B cell (primary cell): ENCODE measurements at regions of chr1 and their contacts with region 1.

Region 1: DNA sequence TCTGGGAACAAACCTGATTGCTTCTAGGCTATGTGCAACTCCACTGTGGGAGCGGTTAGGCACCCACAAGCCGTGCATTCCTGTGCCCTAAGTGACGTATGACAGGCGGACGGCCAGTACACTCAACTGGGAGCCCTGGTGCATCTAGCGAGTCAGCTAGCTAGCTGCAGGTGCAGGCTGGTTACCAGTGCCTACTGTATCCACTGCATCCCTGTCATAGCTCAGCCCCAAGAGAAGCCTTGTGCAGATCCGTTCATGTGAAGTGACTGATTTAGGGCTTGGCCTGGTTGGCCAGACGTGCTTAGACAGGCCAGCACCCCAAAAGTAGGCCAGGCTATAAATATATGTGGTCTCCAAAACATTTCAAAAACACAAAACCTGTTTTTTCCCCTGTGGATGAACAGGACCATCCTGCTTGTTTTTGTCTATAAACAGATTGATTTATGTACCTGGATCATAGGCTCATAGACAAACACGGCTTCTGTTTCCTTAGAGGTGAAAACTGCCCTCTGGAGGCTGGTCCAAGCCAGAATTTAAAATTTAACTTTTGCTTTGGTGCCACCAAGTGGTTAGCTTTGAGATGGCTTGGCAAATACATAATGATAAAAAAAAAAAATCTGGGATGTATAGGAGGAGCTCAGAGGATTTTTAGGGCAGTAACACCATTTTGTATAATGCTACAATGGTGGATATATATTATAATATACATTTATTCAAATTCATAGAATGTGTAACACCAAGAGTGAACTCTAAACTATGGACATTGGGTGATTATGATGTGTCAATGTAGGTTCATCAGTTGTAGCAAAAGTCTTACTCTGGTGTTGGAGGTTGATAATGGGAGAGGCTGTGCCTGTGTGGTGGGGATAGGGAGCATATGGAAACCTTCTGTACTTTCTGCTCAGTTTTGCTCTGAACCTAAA is 68.5 kb downstream of the GIPC2 start:
- DNase-seq: peak; percentile 72
- ATAC-seq: peak; percentile 82
- H3K4me3 ChIP-seq: no peak overlapping the region
- H3K4me3 Mint-ChIP-seq: no peak overlapping the region
- H3K27ac ChIP-seq: no peak overlapping the region
- H3K27ac Mint-ChIP-seq: no peak overlapping the region
- H3K4me1 ChIP-seq: no peaks in the 10 kb centered on the region
- H3K4me1 Mint-ChIP-seq: no peaks in the 10 kb centered on the region
- H3K27me3 ChIP-seq: no peaks in the 10 kb centered on the region
- H3K27me3 Mint-ChIP-seq: no peaks in the 10 kb centered on the region
- CTCF ChIP-seq: peak; percentile 92

Region 2: DNA sequence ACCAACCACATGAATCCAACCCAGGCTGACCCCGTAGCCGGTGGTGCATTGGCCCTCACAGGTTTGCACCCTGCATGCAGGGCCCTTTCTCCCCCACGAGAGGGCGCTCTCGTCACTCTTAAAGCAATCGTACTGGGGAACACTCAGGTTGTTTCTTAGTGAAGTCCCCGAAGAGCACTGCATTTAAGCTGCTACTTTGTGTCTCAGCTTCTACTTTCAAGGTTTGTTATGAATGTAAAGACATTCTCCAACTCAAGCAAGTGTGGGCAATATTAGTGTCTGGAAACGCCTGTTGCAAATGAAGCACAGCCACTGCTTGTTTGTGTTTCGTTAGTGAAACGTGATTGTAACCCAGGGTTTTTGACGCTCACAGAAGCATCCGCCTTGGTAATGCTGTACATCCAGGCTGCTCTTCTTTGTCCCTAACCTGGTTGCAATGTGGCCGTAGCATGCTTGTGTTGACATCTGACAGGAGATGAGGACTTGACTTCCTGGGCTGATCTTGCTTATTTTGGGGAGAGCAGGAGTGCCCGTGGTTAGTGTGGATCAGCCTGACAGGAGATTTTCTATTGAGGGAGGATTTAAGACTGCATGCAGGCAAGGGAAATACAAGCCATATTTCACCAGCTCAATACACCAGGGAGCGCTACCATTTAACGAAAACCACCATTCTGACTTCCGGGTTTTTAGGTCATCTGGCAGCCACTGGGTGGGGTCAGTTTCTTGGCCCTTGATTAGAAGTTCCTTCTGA is 1959.9 kb before region 1 on chr1:
- CTCF ChIA-PET with region 1: interaction called, 3 read pairs
- POLR2A ChIA-PET with region 1: no interaction called
- intact Hi-C with region 1: loop called (anchors 10 kb)
- DNase-seq: peak; percentile 80
- ATAC-seq: peak; percentile 88
- H3K4me3 ChIP-seq: peak overlapping the region; percentile 39 to 62 (median 58)
- H3K4me3 Mint-ChIP-seq: peak overlapping the region; percentile 92
- H3K27ac ChIP-seq: peak overlapping the region; percentile 2 to 54
- H3K27ac Mint-ChIP-seq: peak overlapping the region; percentile 79
- H3K4me1 ChIP-seq: peaks cover 7 to 8% of the 10 kb centered on the region in 2 donors
- H3K4me1 Mint-ChIP-seq: peaks cover 15% of the 10 kb centered on the region
- H3K27me3 ChIP-seq: no peaks in the 10 kb centered on the region
- H3K27me3 Mint-ChIP-seq: peaks cover 3% of the 10 kb centered on the region
- CTCF ChIP-seq: peak; percentile 98

Region 3: GRCh38 chr1:76330991-76331603 is 1783.2 kb before region 1 on chr1:
- CTCF ChIA-PET with region 1: no interaction called
- POLR2A ChIA-PET with region 1: no interaction called
- intact Hi-C with region 1: loop called (anchors 5 kb)
- DNase-seq: peak; percentile 49
- ATAC-seq: peak; percentile 47
- H3K4me3 ChIP-seq: no peak overlapping the region
- H3K4me3 Mint-ChIP-seq: no peak overlapping the region
- H3K27ac ChIP-seq: no peak overlapping the region
- H3K27ac Mint-ChIP-seq: no peak overlapping the region
- H3K4me1 ChIP-seq: no peaks in the 10 kb centered on the region
- H3K4me1 Mint-ChIP-seq: no peaks in the 10 kb centered on the region
- H3K27me3 ChIP-seq: no peaks in the 10 kb centered on the region
- H3K27me3 Mint-ChIP-seq: no peaks in the 10 kb centered on the region
- CTCF ChIP-seq: peak; percentile 98

Region 4: DNA sequence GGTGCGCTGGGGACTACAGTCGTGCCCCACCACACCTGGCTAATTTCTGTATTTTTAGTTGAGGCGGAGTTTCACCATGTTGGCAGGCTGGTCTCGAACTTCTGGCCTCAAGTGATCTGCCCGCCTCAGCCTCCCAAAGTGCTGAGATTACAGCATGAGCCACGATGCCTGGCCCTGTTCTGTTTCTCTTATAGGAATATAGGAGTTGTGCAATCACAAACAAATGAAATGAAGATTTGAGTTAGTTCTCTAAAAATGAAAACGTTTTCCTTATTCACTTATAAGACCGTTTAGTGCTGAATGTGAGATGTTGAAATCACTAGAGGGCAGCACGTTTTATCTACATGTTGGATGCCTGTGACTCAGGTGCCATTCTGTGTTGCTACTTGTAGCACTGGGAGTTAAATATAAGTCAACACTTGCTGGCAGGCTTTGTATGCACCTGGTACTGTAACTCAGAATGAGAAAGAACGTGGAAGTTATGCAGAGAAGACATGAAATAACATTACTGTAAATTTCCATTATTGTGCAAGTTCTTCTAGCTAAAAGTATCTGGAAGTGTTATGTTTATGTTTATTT is 289.1 kb before region 1 on chr1:
- CTCF ChIA-PET with region 1: interaction called, 26 read pairs
- POLR2A ChIA-PET with region 1: no interaction called
- intact Hi-C with region 1: no loop called
- DNase-seq: peak; percentile 26
- ATAC-seq: peak; percentile 24
- H3K4me3 ChIP-seq: no peak overlapping the region
- H3K4me3 Mint-ChIP-seq: no peak overlapping the region
- H3K27ac ChIP-seq: no peak overlapping the region
- H3K27ac Mint-ChIP-seq: no peak overlapping the region
- H3K4me1 ChIP-seq: peaks cover 0 to 4% of the 10 kb centered on the region in 2 donors
- H3K4me1 Mint-ChIP-seq: peaks cover 4% of the 10 kb centered on the region
- H3K27me3 ChIP-seq: no peaks in the 10 kb centered on the region
- H3K27me3 Mint-ChIP-seq: no peaks in the 10 kb centered on the region
- CTCF ChIP-seq: peak; percentile 26

Region 5: DNA sequence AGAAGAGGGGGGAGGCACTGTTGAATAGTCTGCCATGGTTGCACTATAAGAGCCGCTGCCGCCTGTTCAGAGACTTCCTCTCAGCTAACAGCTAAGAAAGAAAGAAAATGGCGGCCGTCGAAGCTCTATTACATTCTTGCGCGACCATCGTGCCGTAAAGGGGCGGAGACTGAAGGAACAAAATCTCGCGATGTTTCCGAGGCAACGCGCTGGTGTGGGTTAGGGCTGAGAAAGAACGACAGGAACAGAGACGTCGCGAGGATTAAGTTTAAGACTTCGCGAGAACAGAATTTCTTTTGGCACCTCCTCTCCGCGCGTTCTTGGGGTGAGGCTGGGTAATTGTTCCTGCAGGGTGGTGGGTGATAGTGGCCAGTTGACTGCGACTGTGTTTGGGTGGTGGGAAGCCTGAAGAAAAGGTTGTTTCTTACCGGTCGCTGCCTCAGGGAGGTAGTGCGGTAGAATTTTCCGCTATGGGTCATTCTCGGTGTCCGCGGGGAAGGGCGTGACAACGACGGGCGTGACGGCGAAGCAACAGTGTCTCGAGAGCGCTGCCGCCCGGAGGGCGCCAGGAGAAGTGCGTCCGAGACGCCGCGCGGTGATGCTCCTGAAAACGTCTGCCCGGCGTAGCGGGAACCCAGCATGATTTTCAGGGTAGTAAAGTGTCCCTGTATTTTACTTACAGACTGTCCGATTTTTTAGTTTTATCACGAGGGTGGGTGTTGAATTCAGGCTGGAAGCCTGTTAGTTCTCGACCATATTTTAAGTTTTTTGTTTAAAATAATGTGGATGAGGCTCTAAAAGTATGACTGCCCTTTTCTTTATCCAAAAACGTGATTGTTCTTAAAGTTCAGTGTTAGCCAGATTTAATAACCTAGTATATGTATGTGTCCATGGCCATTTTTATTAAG is 135.1 kb before region 1 on chr1 and contains the start of gene FUBP1:
- CTCF ChIA-PET with region 1: interaction called, 3 read pairs
- POLR2A ChIA-PET with region 1: no interaction called
- intact Hi-C with region 1: loop called (anchors 1 kb)
- DNase-seq: peak; percentile 99
- ATAC-seq: peak; percentile 77
- H3K4me3 ChIP-seq: peak within 1 kb of the TSS; percentile 77 to 100 (median 96)
- H3K4me3 Mint-ChIP-seq: no peak within 1 kb of the TSS
- H3K27ac ChIP-seq: peak within 1 kb of the TSS; percentile 94 to 99
- H3K27ac Mint-ChIP-seq: no peak within 1 kb of the TSS
- H3K4me1 ChIP-seq: peaks cover 40 to 47% of the 10 kb centered on the region in 2 donors
- H3K4me1 Mint-ChIP-seq: peaks cover 38% of the 10 kb centered on the region
- H3K27me3 ChIP-seq: no peaks in the 10 kb centered on the region
- H3K27me3 Mint-ChIP-seq: no peaks in the 10 kb centered on the region
- CTCF ChIP-seq: peak; percentile 77
- total RNA-seq, gene FUBP1: 249 and 254 TPM in 2 replicates

Region 6: GRCh38 chr1:78004719-78005447 is 109.4 kb before region 1 on chr1 and contains the start of gene DNAJB4:
- CTCF ChIA-PET with region 1: interaction called, 14 read pairs
- POLR2A ChIA-PET with region 1: no interaction called
- intact Hi-C with region 1: no loop called
- DNase-seq: peak; percentile 91
- ATAC-seq: peak; percentile 99
- H3K4me3 ChIP-seq: peak within 1 kb of the TSS; percentile 55 to 95 (median 66)
- H3K4me3 Mint-ChIP-seq: peak within 1 kb of the TSS; percentile 85
- H3K27ac ChIP-seq: peak within 1 kb of the TSS; percentile 97 to 98
- H3K27ac Mint-ChIP-seq: peak within 1 kb of the TSS; percentile 97
- H3K4me1 ChIP-seq: peaks cover 0 to 20% of the 10 kb centered on the region in 2 donors
- H3K4me1 Mint-ChIP-seq: peaks cover 44% of the 10 kb centered on the region
- H3K27me3 ChIP-seq: no peaks in the 10 kb centered on the region
- H3K27me3 Mint-ChIP-seq: no peaks in the 10 kb centered on the region
- CTCF ChIP-seq: no peak
- total RNA-seq, gene DNAJB4: 16.2 and 17.0 TPM in 2 replicates

Region 7: DNA sequence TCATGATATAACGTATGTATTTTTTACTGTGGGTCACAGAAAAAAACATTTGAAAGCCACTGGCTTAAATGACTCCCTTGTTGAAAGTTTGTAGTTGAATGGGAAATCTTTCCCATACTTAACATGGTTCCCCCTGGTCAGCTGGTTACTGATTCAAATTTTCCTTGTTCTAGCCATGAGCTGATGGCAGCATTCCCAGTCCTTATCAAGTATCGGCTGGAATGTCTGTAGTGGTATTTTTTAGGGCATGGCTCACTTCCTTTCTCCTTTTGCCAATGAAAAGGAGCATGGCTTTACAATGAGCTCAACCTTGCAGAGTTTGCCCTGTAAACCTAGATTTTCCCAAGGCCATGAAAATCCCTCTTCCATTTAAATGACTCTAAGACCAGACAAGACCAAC is 12.8 kb before region 1 on chr1:
- CTCF ChIA-PET with region 1: interaction called, 10 read pairs
- POLR2A ChIA-PET with region 1: no interaction called
- intact Hi-C with region 1: no loop called
- DNase-seq: no peak
- ATAC-seq: no peak
- H3K4me3 ChIP-seq: no peak overlapping the region
- H3K4me3 Mint-ChIP-seq: no peak overlapping the region
- H3K27ac ChIP-seq: no peak overlapping the region
- H3K27ac Mint-ChIP-seq: no peak overlapping the region
- H3K4me1 ChIP-seq: no peaks in the 10 kb centered on the region
- H3K4me1 Mint-ChIP-seq: no peaks in the 10 kb centered on the region
- H3K27me3 ChIP-seq: no peaks in the 10 kb centered on the region
- H3K27me3 Mint-ChIP-seq: peaks cover 15% of the 10 kb centered on the region
- CTCF ChIP-seq: no peak

Region 8: GRCh38 chr1:78156805-78157521 is 42.7 kb after region 1 on chr1:
- CTCF ChIA-PET with region 1: no interaction called
- POLR2A ChIA-PET with region 1: no interaction called
- intact Hi-C with region 1: no loop called
- DNase-seq: no peak
- ATAC-seq: no peak
- H3K4me3 ChIP-seq: no peak overlapping the region
- H3K4me3 Mint-ChIP-seq: no peak overlapping the region
- H3K27ac ChIP-seq: no peak overlapping the region
- H3K27ac Mint-ChIP-seq: no peak overlapping the region
- H3K4me1 ChIP-seq: no peaks in the 10 kb centered on the region
- H3K4me1 Mint-ChIP-seq: no peaks in the 10 kb centered on the region
- H3K27me3 ChIP-seq: no peaks in the 10 kb centered on the region
- H3K27me3 Mint-ChIP-seq: peaks cover 7% of the 10 kb centered on the region
- CTCF ChIP-seq: no peak

Region 9: GRCh38 chr1:78229344-78229743 is 115.0 kb after region 1 on chr1:
- CTCF ChIA-PET with region 1: no interaction called
- POLR2A ChIA-PET with region 1: no interaction called
- intact Hi-C with region 1: no loop called
- DNase-seq: no peak
- ATAC-seq: no peak
- H3K4me3 ChIP-seq: no peak overlapping the region
- H3K4me3 Mint-ChIP-seq: no peak overlapping the region
- H3K27ac ChIP-seq: no peak overlapping the region
- H3K27ac Mint-ChIP-seq: no peak overlapping the region
- H3K4me1 ChIP-seq: no peaks in the 10 kb centered on the region
- H3K4me1 Mint-ChIP-seq: no peaks in the 10 kb centered on the region
- H3K27me3 ChIP-seq: peaks cover 0 to 6% (median 0%) of the 10 kb centered on the region in 4 experiments
- H3K27me3 Mint-ChIP-seq: peaks cover 7% of the 10 kb centered on the region
- CTCF ChIP-seq: no peak

Region 10: DNA sequence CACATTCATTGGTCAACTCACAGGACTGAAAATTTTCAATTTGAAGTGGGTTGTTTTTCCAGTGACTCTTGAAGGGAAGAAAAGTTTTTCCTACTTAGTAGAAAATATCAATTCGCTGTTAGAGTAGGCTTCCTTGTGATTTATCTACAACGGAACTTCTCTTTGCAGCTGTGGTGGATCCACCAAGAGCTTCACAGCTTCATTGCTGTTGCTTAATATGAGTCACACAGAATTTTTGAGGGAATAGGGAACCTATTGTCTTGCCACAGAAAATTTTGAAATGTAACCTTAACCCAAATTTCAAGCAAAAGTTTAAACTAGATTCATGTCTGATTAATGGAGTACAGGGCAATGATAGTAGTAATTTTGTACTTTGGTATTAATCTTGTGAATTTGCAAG is 447.6 kb after region 1 on chr1:
- CTCF ChIA-PET with region 1: no interaction called
- POLR2A ChIA-PET with region 1: no interaction called
- intact Hi-C with region 1: no loop called
- DNase-seq: no peak
- ATAC-seq: no peak
- H3K4me3 ChIP-seq: no peak overlapping the region
- H3K4me3 Mint-ChIP-seq: no peak overlapping the region
- H3K27ac ChIP-seq: no peak overlapping the region
- H3K27ac Mint-ChIP-seq: no peak overlapping the region
- H3K4me1 ChIP-seq: no peaks in the 10 kb centered on the region
- H3K4me1 Mint-ChIP-seq: no peaks in the 10 kb centered on the region
- H3K27me3 ChIP-seq: no peaks in the 10 kb centered on the region
- H3K27me3 Mint-ChIP-seq: no peaks in the 10 kb centered on the region
- CTCF ChIP-seq: no peak